Activated B cell treated with CpG ODN at 0.5 μM for 24 hours (primary cell): ENCODE measurements at regions of chr6 and their contacts with region 1.

Region 1: GRCh38 chr6:7439228-7439627 is 49.6 kb downstream of the RIOK1 start:
- DNase-seq: no peak
- ATAC-seq: peak; percentile 56
- H3K4me3 Mint-ChIP-seq: no peak overlapping the region
- H3K27ac Mint-ChIP-seq: no peak overlapping the region
- H3K4me1 Mint-ChIP-seq: peaks cover 13% of the 10 kb centered on the region
- H3K27me3 Mint-ChIP-seq: peaks cover 1% of the 10 kb centered on the region
- CTCF ChIP-seq: no peak

Region 2: DNA sequence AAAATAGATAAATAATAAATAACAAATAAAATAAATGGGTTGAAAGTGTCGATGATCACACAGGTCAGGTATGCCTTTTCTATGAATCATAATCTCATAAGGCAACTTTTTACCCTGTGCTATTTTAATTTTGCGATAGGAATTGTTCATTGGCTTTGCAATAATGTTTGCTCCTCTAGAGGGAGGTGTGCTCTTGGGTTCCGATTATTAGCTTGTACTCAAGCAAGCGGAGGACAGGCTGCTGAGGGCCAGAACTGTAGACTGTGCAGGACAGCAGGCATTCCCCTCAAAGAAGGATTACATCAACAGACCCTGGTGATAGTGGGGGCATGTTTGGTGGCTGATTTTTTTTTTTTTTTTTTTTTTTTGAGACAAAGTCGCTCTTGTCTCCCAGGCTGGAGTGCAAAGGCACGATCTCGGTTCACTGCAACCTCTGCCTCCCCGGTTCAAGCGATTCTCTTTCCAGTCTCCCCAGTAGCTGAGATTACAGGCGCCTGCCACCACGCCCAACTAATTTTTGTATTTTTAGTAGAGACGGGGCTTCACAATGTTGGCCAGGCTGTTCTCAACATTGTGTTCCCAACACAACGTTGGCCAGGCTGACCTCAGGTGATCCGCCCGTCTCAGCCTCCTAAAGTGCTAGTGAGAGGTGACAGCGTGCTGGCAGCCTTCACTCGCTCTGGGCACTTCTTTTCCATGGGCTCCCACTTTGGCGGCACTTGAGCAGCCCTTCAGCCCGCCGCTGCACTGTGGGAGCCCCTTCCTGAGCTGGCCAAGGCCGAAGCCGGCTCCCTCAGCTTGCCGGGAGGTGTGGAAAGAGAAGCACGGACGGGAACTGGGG is 14.0 kb before region 1 on chr6:
- CTCF ChIA-PET with region 1: no interaction called
- POLR2A ChIA-PET with region 1: interaction called, 18 read pairs
- intact Hi-C with region 1: no loop called
- DNase-seq: no peak
- ATAC-seq: no peak
- H3K4me3 Mint-ChIP-seq: no peak overlapping the region
- H3K27ac Mint-ChIP-seq: no peak overlapping the region
- H3K4me1 Mint-ChIP-seq: no peaks in the 10 kb centered on the region
- H3K27me3 Mint-ChIP-seq: no peaks in the 10 kb centered on the region
- CTCF ChIP-seq: no peak

Region 3: GRCh38 chr6:7454696-7455358 is 15.6 kb after region 1 on chr6:
- CTCF ChIA-PET with region 1: no interaction called
- POLR2A ChIA-PET with region 1: no interaction called
- intact Hi-C with region 1: no loop called
- DNase-seq: no peak
- ATAC-seq: no peak
- H3K4me3 Mint-ChIP-seq: no peak overlapping the region
- H3K27ac Mint-ChIP-seq: no peak overlapping the region
- H3K4me1 Mint-ChIP-seq: no peaks in the 10 kb centered on the region
- H3K27me3 Mint-ChIP-seq: peaks cover 6% of the 10 kb centered on the region
- CTCF ChIP-seq: no peak